ENCODE measurements at regions of chr5 and their contacts with region 1.

Region 1: GRCh38 chr5:172463031-172463430 is 8.7 kb upstream of the SH3PXD2B start:
- DNase-seq: no peak
- H3K27ac ChIP-seq: no peak overlapping the region
- CTCF ChIP-seq: no peak

Region 2: GRCh38 chr5:172243302-172243701 is 219.7 kb before region 1 on chr5:
- CTCF ChIA-PET with region 1: no interaction called
- POLR2A ChIA-PET with region 1: interaction called, 12 read pairs
- DNase-seq: no peak
- H3K27ac ChIP-seq: no peak overlapping the region
- CTCF ChIP-seq: no peak

Region 3: DNA sequence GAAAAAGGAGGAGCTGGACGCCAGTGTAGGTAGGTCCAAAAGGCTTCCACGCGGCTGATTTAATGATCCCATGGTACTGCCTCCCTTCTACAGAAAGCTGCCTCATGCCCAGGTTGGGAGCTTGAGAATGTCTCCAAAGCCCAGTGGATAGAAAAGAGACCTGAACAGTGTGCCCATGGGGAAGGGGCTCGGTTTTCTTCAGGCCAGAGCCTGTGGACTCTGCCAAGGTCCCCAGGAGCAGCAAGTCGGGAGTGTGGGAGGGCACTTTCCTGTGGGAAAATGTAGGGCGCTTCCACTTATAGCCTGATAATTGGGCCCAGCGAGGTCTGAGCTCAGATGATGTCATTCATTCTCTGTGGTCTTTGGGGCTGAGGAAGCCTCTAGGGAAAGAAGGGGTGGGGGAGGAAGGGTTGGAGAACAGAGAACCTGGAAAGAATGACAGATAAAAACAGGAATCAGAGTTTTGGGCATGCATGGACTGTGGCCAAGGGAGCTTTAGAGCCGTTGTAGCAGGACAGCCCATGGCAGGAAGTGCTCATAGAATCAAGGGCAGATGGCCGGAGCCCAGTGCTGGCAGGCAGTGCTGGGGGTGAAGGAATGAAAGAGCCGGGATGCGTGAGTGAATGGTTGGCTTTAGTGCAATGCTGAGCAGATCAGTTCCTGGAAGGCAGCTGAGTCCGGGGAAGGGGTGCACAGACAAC is 33.8 kb after region 1 on chr5:
- CTCF ChIA-PET with region 1: no interaction called
- POLR2A ChIA-PET with region 1: no interaction called
- DNase-seq: no peak
- H3K27ac ChIP-seq: no peak overlapping the region
- CTCF ChIP-seq: no peak